ENCODE measurements at regions of chr1 and their contacts with region 1.

Region 1: GRCh38 chr1:114482204-114482980 is 28.6 kb downstream of the TRIM33 start:
- DNase-seq: peak in 7 of 9 donors; percentile 11 to 54 (median 39)
- ATAC-seq: peak; percentile 90
- H3K4me3 ChIP-seq: no peak overlapping the region
- H3K4me3 Mint-ChIP-seq: peak overlapping the region; percentile 37 to 70 (median 62)
- H3K27ac ChIP-seq: peak overlapping the region; percentile 49
- H3K27ac Mint-ChIP-seq: peak overlapping the region; percentile 64 to 94 (median 81)
- H3K4me1 ChIP-seq: peaks cover 5 to 7% of the 10 kb centered on the region in 2 donors
- H3K4me1 Mint-ChIP-seq: peaks cover 34 to 74% (median 65%) of the 10 kb centered on the region in 7 donors
- H3K27me3 ChIP-seq: no peaks in the 10 kb centered on the region
- H3K27me3 Mint-ChIP-seq: no peaks in the 10 kb centered on the region

Region 2: DNA sequence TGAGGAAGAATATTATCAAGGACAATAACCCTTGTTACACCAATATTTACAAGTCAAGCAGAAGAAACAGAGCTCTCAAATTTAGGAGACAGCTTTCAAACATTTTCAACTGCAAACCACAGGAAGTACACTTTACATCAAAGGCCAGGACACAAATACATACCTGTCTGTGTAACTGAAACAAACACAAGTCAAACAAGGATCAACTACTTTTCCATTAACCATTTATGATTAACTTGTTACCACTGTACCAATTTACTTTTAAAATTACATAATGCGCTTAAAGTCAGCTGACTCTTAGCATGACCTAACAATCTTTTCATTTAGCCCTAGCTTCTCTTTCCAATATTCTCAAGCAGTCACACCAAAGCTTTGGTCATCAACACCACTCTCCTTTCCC is 14.9 kb before region 1 on chr1:
- CTCF ChIA-PET with region 1: interaction called, 4 read pairs
- POLR2A ChIA-PET with region 1: no interaction called
- intact Hi-C with region 1: loop called in 1 of 2 experiments (anchors 2 kb)
- DNase-seq: peak in 3 of 9 donors; percentile 11 to 24 (median 13)
- ATAC-seq: peak; percentile 26
- H3K4me3 ChIP-seq: no peak overlapping the region
- H3K4me3 Mint-ChIP-seq: peak overlapping the region in 9 of 10 donors; percentile 14 to 73 (median 68)
- H3K27ac ChIP-seq: no peak overlapping the region
- H3K27ac Mint-ChIP-seq: peak overlapping the region in 8 of 9 donors; percentile 20 to 93 (median 64)
- H3K4me1 ChIP-seq: peaks cover 20 to 23% of the 10 kb centered on the region in 2 donors
- H3K4me1 Mint-ChIP-seq: peaks cover 45 to 80% (median 62%) of the 10 kb centered on the region in 7 donors
- H3K27me3 ChIP-seq: no peaks in the 10 kb centered on the region
- H3K27me3 Mint-ChIP-seq: no peaks in the 10 kb centered on the region

Measured in naive thymus-derived CD4-positive, alpha-beta T cell (primary cell).